Activated CD8-positive, alpha-beta T cell treated with anti-CD3 and anti-CD28 coated beads for 36 hours (primary cell): ENCODE measurements at regions of chr12 and their contacts with region 1.

Region 1: DNA sequence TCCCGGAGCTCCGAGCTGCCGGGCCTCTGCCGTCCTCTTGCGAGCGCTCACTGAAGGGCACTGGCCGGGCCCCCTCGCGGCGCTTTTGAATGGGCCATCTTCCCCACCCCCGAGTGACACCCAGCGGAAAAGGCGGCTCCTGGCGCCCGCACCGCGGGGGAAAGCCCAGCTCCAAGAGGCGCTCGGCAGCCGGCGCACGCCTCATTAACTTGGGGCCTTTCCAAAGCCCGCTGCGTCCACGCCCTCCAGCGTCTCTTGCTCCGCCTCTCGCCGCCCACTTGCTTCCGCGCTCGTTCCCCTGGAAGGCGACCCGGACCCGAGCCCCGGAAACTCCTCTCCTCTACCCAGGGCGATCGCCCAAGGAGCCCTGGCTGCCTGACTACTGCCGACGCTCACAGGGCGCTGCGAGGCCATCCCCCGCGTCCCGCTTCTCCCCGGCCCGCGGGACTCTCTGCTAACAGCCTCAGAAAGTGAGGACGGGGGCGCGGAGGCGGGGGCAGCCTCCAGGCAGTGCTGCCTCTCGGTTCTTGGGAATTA is at the start of gene PHLDA1:
- DNase-seq: peak; percentile 98
- ATAC-seq: peak; percentile 86
- H3K4me3 Mint-ChIP-seq: peak within 1 kb of the TSS; percentile 97
- H3K27ac Mint-ChIP-seq: peak within 1 kb of the TSS; percentile 98
- H3K4me1 Mint-ChIP-seq: peaks cover 42% of the 10 kb centered on the region
- H3K27me3 Mint-ChIP-seq: no peaks in the 10 kb centered on the region
- CTCF ChIP-seq: peak; percentile 68
- total RNA-seq, gene PHLDA1: 33.9 to 35.0 TPM

Region 2: DNA sequence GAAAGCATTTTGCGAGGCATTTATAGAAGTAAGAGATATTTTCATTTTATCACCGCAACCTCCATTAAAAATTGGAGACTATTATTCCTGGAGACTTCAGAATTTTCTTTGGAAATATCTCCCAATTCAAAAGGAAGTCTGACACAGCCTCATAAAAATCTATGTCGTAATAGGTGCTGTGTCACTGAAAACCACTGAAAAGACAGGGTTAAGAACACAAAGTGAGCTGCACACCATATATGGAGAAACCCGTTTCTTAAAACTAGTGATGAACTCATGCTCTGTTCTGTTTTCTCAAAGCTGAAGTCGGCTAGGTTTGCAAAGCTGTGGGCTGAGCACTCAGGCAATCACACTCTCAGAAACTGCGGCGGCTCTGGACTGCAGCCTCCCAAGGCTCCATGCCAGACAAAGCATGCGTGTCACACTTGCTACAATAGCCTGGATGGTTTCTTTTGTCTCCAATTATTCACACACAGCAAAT is 551.1 kb before region 1 on chr12 and contains the start of gene GLIPR1:
- CTCF ChIA-PET with region 1: interaction called, 27 read pairs
- POLR2A ChIA-PET with region 1: interaction called, 4 read pairs
- intact Hi-C with region 1: no loop called
- DNase-seq: peak; percentile 86
- ATAC-seq: peak; percentile 86
- H3K4me3 Mint-ChIP-seq: peak within 1 kb of the TSS; percentile 96
- H3K27ac Mint-ChIP-seq: peak within 1 kb of the TSS; percentile 98
- H3K4me1 Mint-ChIP-seq: peaks cover 80% of the 10 kb centered on the region
- H3K27me3 Mint-ChIP-seq: no peaks in the 10 kb centered on the region
- CTCF ChIP-seq: no peak
- total RNA-seq, gene GLIPR1: 15.9 to 18.6 TPM

Region 3: GRCh38 chr12:75641031-75641780 is 390.4 kb before region 1 on chr12:
- CTCF ChIA-PET with region 1: interaction called, 4 read pairs
- POLR2A ChIA-PET with region 1: no interaction called
- intact Hi-C with region 1: loop called (anchors 5 kb)
- DNase-seq: peak; percentile 73
- ATAC-seq: peak; percentile 93
- H3K4me3 Mint-ChIP-seq: no peak overlapping the region
- H3K27ac Mint-ChIP-seq: peak overlapping the region; percentile 70
- H3K4me1 Mint-ChIP-seq: peaks cover 23% of the 10 kb centered on the region
- H3K27me3 Mint-ChIP-seq: peaks cover 10% of the 10 kb centered on the region
- CTCF ChIP-seq: no peak

Region 4: DNA sequence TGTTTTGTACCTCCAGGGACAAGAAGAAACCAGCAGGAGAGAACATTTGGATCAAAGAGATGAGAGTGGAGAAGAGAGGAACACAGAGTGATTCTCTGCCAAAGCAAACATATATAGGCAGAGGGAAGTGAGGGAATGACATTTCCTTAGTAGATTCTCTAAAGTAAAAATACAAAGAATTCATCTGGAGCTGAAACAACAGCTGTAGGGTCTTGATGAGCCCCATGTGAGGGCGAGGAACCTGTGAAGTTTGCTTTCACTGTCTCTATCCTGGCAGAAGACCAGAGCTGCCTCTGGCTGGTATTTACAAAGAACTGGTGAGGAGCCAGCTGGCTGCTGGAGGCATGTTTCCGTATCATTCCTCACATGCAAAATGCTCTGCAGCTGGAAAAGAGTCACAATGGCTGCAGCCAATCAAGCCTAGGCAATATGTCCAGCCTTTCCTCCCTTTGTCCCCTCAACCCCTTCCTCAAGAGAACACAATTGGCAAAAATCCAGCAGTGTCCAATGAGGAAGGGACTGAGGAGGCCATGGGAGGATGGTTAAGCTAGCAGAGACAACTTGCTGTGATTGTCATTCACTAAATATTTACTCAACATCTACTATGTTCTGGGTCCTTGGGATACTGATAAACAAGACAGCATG is 122.5 kb before region 1 on chr12:
- CTCF ChIA-PET with region 1: interaction called, 3 read pairs
- POLR2A ChIA-PET with region 1: interaction called, 30 read pairs
- intact Hi-C with region 1: no loop called
- DNase-seq: no peak
- ATAC-seq: no peak
- H3K4me3 Mint-ChIP-seq: no peak overlapping the region
- H3K27ac Mint-ChIP-seq: no peak overlapping the region
- H3K4me1 Mint-ChIP-seq: peaks cover 24% of the 10 kb centered on the region
- H3K27me3 Mint-ChIP-seq: peaks cover 15% of the 10 kb centered on the region
- CTCF ChIP-seq: no peak

Region 5: GRCh38 chr12:75944097-75944904 is 87.3 kb before region 1 on chr12:
- CTCF ChIA-PET with region 1: interaction called, 17 read pairs
- POLR2A ChIA-PET with region 1: interaction called, 25 read pairs
- intact Hi-C with region 1: no loop called
- DNase-seq: peak; percentile 42
- ATAC-seq: peak; percentile 88
- H3K4me3 Mint-ChIP-seq: peak overlapping the region; percentile 55
- H3K27ac Mint-ChIP-seq: peak overlapping the region; percentile 96
- H3K4me1 Mint-ChIP-seq: peaks cover 32% of the 10 kb centered on the region
- H3K27me3 Mint-ChIP-seq: no peaks in the 10 kb centered on the region
- CTCF ChIP-seq: no peak